Activated CD4-positive, alpha-beta memory T cell treated with anti-CD3 and anti-CD28 coated beads, Interleukin-2, amount 10 ng/mL, durations not matched to agents 7 days and 5 days (primary cell): ENCODE measurements at regions of chr17 and their contacts with region 1.

Region 1: GRCh38 chr17:75289115-75289831 is at the start of gene SLC25A19:
- DNase-seq: peak; percentile 99
- H3K4me3 Mint-ChIP-seq: peak within 1 kb of the TSS; percentile 97
- H3K27ac Mint-ChIP-seq: peak within 1 kb of the TSS; percentile 100
- H3K4me1 Mint-ChIP-seq: peaks cover 29% of the 10 kb centered on the region
- H3K27me3 Mint-ChIP-seq: no peaks in the 10 kb centered on the region
- total RNA-seq, gene SLC25A19: 24.3 to 27.9 TPM

Region 2: DNA sequence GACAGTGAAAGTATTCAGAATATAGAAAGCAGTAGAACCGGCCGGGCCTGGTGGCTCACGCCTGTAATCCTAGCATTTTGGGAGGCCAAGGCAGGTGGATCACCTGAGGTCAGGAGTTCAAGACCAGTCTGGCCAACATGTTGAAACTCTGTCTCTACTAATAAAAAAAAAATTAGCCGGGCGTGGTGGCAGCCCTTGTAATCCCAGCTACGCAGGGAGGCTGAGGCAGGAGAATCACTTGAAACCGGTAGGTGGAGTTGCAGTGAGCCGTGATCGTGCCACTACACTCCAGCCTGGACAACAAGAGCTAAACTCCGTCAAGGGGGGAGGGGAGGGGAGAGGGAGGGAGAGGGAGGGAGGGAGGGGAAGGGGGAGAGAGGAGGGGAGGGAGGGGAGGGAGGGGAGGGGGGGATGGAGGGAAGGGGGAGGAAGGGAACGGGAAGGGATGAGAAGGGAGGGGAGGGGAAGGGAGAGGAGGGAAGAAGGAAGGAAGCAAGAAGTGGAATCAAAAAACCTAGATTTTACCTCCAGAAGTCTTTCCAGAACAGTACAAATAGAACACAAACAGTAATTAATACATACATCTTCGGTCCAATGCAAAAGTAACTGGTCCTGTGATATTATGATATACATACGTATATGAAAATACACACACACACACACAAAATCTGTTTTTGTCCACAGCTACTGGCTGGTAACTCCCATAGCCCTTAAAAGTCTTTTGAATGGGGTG is 146.9 kb before region 1 on chr17:
- CTCF ChIA-PET with region 1: no interaction called
- POLR2A ChIA-PET with region 1: no interaction called
- DNase-seq: no peak
- H3K4me3 Mint-ChIP-seq: no peak overlapping the region
- H3K27ac Mint-ChIP-seq: peak overlapping the region; percentile 84
- H3K4me1 Mint-ChIP-seq: peaks cover 29% of the 10 kb centered on the region
- H3K27me3 Mint-ChIP-seq: no peaks in the 10 kb centered on the region

Region 3: DNA sequence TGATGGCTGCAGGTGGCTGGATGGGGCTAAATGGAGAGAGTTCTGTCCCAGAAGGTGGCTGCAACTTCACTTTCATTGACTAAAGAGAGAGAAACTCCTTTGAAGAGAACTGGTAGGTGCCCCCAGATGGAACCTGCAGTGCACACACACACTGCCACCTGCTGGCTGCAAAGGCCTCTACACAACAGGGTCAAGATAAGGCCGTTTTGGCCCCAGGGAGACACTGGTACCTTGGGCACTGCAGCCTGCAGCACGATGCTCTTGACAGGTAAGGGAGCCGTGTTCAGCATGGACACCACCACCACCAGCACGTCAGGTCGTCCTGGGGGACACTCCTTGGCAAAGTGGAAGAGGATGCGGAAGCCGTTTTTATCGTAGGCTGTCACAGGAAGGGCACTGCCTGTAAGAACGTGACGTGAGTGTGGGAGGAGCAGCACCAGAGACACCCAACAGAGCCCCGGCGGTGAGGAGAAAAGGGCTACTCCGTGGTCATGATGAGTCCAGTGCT is 50.5 kb before region 1 on chr17:
- CTCF ChIA-PET with region 1: interaction called, 3 read pairs
- POLR2A ChIA-PET with region 1: interaction called, 10 read pairs
- DNase-seq: peak; percentile 67
- H3K4me3 Mint-ChIP-seq: peak overlapping the region; percentile 57
- H3K27ac Mint-ChIP-seq: peak overlapping the region; percentile 87
- H3K4me1 Mint-ChIP-seq: peaks cover 41% of the 10 kb centered on the region
- H3K27me3 Mint-ChIP-seq: no peaks in the 10 kb centered on the region

Region 4: DNA sequence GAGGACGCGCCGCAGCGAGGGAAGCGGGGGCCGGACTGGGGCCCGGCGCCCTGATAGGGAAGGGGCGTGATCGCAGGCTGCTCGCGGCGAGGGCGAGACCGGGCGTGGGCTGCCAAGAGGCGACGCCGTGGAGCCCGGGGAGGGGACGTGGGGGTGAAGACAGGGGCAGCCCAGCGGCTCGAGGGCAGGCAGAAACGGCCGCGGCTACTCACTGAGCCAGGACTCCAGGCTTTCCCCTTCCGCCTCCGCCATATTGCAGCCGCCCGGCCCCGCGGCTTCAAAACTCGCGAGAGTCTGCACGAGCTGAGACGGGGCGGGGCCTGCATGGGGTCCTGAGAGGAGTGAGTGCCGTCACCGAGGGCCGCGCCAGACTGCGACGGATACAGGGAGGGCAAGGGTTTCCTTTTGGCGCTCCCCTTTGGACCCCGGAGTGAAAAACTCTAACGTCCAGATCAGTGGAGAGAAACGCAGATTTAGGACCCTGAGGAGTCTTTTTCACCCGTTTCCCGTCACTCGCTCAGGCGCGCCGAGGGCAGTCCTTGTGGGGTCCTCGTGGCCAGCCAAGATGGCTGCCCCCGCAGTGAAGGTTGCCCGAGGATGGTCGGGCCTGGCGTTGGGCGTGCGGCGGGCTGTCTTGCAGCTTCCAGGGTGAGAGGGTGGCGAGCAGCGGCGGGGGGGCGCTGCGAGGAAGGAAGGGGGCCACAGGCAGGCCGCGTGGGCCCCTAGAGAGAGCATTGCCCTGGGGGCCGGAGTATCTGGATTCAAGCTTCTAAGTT is 27.7 kb before region 1 on chr17 and contains the starts of genes GGA3 and MRPS7:
- CTCF ChIA-PET with region 1: interaction called, 22 read pairs
- POLR2A ChIA-PET with region 1: interaction called, 49 read pairs
- DNase-seq: peak; percentile 96
- H3K4me3 Mint-ChIP-seq: peak within 1 kb of the TSS; percentile 96
- H3K27ac Mint-ChIP-seq: peak within 1 kb of the TSS; percentile 99
- H3K4me1 Mint-ChIP-seq: peaks cover 53% of the 10 kb centered on the region
- H3K27me3 Mint-ChIP-seq: no peaks in the 10 kb centered on the region
- total RNA-seq, gene GGA3: 73.4 to 79.4 TPM
- total RNA-seq, gene MRPS7: 39.7 to 40.0 TPM

Region 5: GRCh38 chr17:75277664-75278071 is 11.6 kb before region 1 on chr17:
- CTCF ChIA-PET with region 1: interaction called, 105 read pairs
- POLR2A ChIA-PET with region 1: interaction called, 124 read pairs
- DNase-seq: no peak
- H3K4me3 Mint-ChIP-seq: no peak overlapping the region
- H3K27ac Mint-ChIP-seq: no peak overlapping the region
- H3K4me1 Mint-ChIP-seq: peaks cover 20% of the 10 kb centered on the region
- H3K27me3 Mint-ChIP-seq: no peaks in the 10 kb centered on the region

Region 6: DNA sequence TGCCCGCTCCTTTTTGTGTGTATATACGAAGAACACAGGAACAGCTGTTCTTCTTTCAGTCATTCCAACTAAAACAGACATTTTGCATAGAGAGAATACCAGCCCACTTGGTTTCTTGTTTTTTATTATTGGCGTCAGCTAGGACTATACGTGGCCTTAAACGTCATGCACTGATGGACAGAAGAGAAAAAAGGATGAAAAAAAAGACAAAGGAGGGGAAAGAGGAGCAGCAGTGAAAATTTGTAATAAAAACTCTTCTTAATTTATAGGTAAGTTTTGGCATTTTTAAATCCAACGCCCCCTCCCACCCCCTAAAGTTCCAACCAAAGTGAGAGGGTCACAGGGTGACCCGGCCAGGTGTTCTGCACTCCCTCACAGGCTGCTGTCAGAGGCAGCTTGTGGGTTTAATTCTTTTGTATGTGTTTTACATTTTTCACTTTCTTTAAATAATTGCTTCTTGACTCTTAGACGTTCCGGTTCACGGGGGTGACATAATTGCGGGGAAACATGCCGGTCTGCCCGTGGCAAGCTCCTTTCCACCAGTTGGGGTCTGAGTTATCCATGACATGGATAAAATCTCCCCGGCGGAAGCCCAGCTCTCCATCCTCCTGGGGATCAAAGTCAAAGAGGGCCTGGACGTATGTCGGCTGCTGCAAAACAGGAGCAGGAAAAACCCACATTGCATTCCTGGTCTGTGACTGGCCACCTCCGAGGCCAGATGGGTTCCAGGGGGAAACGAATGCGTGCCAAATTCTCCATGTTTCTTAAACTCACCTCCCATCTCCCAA is 30.8 kb after region 1 on chr17:
- CTCF ChIA-PET with region 1: interaction called, 10 read pairs
- POLR2A ChIA-PET with region 1: interaction called, 16 read pairs
- DNase-seq: no peak
- H3K4me3 Mint-ChIP-seq: no peak overlapping the region
- H3K27ac Mint-ChIP-seq: no peak overlapping the region
- H3K4me1 Mint-ChIP-seq: peaks cover 22% of the 10 kb centered on the region
- H3K27me3 Mint-ChIP-seq: no peaks in the 10 kb centered on the region

Region 7: DNA sequence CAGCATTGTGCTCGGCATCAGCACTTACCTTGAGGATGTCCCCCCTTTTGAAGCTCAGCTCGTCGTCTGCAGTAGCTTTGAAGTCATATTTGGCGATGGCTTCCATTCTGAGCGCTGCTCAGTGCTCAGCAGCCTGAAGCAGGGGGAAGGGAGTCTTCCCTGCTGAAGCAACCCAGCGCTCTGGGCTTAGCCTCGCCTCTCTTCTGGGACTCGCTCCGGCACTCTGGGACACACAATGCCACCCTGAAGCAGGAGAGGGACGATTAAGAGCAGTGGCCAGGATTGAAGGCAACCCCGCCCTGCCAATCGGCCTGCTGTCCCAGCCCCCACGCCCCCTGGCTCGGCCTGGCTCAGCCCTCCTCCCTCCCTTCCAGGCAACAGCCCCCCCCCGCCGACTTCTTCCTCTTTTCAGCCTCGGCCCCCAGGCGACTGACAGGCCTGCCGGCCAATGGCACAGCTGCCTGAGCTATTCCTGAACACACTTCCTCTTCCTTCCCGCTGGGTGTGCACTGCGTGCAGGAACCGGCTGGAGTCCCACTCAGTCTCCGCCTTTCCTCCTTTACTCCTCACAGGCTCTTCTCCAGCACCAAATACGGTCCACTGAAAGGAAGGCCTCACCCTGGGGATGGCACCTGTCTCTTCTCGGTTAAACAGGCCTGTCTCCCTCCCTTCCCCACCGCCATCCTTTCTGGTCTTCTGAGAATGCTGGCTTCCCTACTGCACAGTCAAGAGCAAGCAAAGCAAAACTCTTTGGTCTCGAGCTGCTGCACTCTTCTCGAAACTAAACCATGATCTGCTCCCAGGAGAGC is 104.5 kb after region 1 on chr17:
- CTCF ChIA-PET with region 1: interaction called, 10 read pairs
- POLR2A ChIA-PET with region 1: interaction called, 22 read pairs
- DNase-seq: peak; percentile 86
- H3K4me3 Mint-ChIP-seq: peak overlapping the region; percentile 90
- H3K27ac Mint-ChIP-seq: peak overlapping the region; percentile 59
- H3K4me1 Mint-ChIP-seq: peaks cover 72% of the 10 kb centered on the region
- H3K27me3 Mint-ChIP-seq: no peaks in the 10 kb centered on the region

Region 8: GRCh38 chr17:75405365-75406221 is 116.3 kb after region 1 on chr17 and contains the start of gene GRB2:
- CTCF ChIA-PET with region 1: interaction called, 20 read pairs
- POLR2A ChIA-PET with region 1: interaction called, 38 read pairs
- DNase-seq: peak; percentile 100
- H3K4me3 Mint-ChIP-seq: peak within 1 kb of the TSS; percentile 95
- H3K27ac Mint-ChIP-seq: peak within 1 kb of the TSS; percentile 96
- H3K4me1 Mint-ChIP-seq: peaks cover 47% of the 10 kb centered on the region
- H3K27me3 Mint-ChIP-seq: no peaks in the 10 kb centered on the region
- total RNA-seq, gene GRB2: 130 to 132 TPM